ENCODE measurements at regions of chr11 and their contacts with region 1.

Region 1: DNA sequence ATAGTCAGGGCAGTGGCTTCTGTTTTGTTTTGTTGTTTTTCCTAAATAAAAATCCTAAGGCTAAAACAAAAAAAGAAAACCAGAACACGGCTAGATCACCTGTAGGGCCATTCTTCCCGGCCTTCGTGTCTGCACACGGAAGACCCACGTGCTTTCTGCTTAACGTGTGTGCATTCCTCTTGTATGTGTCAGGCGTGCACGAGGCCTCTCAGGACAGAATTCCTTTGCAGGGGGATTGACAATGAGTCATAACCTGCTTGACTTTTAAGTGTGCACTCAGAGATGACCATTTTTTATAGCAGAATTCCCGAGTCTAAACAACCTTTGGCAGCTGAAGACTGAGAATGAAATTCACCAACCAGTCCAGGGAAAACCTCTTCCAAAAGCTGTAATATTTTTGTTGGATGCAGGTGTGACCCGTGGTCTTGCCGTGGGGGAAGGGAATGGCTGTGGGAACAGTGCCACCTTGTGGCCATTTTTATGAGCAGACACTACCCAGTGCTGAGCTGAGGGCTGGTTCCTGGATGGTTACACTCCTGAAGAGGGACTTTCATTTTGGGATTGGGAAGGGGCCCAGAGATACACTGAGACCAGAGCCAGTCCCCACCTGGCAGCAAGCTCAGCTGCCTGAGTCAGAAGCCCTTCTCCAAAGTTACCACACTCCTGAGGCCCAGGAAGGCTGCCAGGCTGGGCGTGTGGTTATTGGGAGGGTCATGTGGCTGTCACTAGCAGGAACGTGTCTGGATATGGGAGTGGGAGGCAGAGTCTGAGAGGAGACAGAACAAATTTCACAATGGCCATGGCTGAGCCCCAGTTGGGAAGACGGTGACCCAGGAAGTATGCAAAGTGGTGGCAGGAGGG is 35.8 kb upstream of the DKK3 start:
- DNase-seq: peak; percentile 73
- H3K4me3 ChIP-seq: no peak overlapping the region
- H3K27ac ChIP-seq: peak overlapping the region; percentile 36 to 66 (median 40)
- H3K4me1 ChIP-seq: peaks cover 0 to 15% (median 9%) of the 10 kb centered on the region in 4 donors
- H3K27me3 ChIP-seq: no peaks in the 10 kb centered on the region
- CTCF ChIP-seq: peak; percentile 87 to 96 (median 88)
- EP300 ChIP-seq: peak; percentile 50
- POLR2A ChIP-seq: no peak

Region 2: DNA sequence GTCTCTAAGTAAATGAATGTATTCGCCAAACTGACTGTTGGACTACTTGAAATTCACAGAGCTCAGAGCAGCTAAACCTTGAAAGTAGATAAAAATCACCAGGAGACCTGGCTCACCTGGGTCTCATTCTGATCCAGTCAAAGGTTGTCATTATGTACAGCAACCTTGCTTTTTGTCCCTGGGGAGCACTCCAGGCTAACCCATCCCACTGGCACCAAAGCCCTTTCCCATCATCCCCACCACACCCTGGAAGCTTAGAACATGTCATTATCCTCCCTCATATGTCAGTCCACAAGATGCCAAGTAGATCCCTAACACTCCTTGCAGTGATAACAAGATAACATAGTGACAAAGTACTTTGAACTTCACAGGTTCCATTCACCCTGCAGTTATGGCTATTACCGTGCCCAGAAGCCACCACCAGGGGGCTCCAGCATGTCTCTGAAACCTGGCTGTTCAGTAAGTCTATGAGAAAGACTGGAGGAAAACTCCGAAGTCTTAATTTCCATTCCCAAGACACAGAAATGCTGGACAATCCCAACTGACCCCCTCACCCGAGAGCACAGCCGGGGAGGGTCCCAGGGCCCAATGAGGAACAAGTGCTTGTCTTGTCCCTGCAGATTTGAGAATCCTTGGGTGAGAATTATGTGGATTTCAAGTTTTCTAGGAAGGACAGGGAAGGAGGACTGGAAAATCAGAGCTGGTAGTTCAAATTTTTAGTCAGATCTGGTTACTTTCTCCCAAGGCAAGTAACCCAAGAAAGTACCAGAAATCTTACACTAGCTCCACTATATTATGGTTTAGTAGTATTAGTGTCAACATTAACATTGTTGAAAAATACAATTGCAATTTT is 245.4 kb before region 1 on chr11:
- in situ Hi-C with region 1: loop called (anchors 5 to 25 kb)
- intact Hi-C with region 1: loop called (anchors 2 kb)
- DNase-seq: peak; percentile 88
- H3K4me3 ChIP-seq: no peak overlapping the region
- H3K27ac ChIP-seq: no peak overlapping the region
- H3K4me1 ChIP-seq: no peaks in the 10 kb centered on the region
- H3K27me3 ChIP-seq: peaks cover 13% of the 10 kb centered on the region
- CTCF ChIP-seq: peak; percentile 65 to 91 (median 88)
- EP300 ChIP-seq: no peak
- POLR2A ChIP-seq: no peak

Region 3: DNA sequence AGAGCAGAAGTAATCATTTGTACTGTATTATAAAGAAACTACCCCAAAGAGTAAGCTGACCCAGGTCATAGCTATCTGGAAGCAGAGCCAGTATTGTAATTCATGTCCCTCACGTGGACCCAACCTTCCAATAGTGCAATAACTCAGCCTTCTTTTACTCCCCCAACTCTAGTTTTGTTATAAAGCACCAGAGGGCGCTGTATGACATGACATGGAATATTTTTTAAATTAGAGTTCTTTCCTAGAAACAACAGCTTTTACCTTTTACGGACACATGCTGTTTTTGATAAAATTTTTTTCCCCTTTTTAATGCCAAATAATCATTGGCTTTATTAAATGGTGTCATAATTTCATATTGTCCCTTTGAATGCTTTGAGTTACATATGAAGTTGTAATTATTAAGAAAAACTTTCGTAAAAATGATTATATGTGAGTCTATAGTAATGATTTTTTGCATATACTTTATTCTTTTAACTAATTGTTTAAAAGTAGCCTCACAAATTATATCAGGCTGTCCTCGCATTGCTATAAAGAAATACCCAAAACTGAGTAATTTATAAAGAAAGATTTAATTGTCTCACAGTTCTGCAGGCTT is 112.6 kb before region 1 on chr11:
- in situ Hi-C with region 1: loop called in 3 of 4 experiments (anchors 10 to 25 kb)
- intact Hi-C with region 1: loop called (anchors 5 kb)
- DNase-seq: no peak
- H3K4me3 ChIP-seq: no peak overlapping the region
- H3K27ac ChIP-seq: no peak overlapping the region
- H3K4me1 ChIP-seq: no peaks in the 10 kb centered on the region
- H3K27me3 ChIP-seq: no peaks in the 10 kb centered on the region
- CTCF ChIP-seq: peak; percentile 50 to 64 (median 56)
- EP300 ChIP-seq: no peak
- POLR2A ChIP-seq: no peak

Region 4: DNA sequence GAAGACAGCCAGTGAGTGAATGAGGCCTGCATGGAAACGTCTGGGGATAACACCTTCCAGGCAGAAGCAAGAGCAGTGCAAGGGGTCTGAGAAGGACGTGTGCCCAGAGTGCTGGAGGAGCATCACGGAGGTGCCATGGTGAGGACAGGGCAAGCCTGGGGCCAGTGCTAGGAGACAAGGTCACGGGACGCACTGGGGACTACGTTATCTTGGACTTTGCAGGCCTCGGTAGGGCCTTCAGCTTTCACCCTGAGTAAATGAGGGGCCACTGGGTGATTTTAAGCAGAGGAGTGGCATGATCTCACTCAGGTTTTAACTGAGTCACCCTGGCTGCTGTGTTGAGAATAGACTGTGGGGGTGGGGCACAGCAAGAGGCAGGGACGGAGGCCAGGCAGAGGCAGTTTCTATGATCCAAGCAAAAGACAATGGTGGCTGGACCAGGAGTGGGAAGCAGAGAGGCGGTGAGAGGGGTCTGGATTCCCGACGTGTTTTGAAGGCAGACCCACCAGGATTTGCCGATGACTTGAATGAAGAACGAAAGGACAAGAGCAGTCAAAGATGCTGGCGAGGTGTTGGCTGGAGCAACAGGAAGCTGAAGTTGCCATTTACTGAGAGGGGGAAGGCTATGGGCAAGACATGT is 230.5 kb after region 1 on chr11:
- in situ Hi-C with region 1: loop called in 1 of 4 experiments (anchors 5 kb)
- intact Hi-C with region 1: no loop called
- DNase-seq: no peak
- H3K4me3 ChIP-seq: no peak overlapping the region
- H3K27ac ChIP-seq: no peak overlapping the region
- H3K4me1 ChIP-seq: peaks cover 0 to 10% (median 5%) of the 10 kb centered on the region in 4 donors
- H3K27me3 ChIP-seq: no peaks in the 10 kb centered on the region
- CTCF ChIP-seq: no peak
- EP300 ChIP-seq: no peak
- POLR2A ChIP-seq: no peak

Region 5: GRCh38 chr11:12288212-12288930 is 244.2 kb after region 1 on chr11:
- in situ Hi-C with region 1: loop called in 2 of 4 experiments (anchors 5 kb)
- intact Hi-C with region 1: no loop called
- DNase-seq: peak; percentile 79
- H3K4me3 ChIP-seq: no peak overlapping the region
- H3K27ac ChIP-seq: peak overlapping the region; percentile 83 to 91 (median 86)
- H3K4me1 ChIP-seq: peaks cover 5 to 37% (median 16%) of the 10 kb centered on the region in 4 donors
- H3K27me3 ChIP-seq: no peaks in the 10 kb centered on the region
- CTCF ChIP-seq: peak; percentile 67 to 85 (median 83)
- EP300 ChIP-seq: no peak
- POLR2A ChIP-seq: no peak

Measured in transverse colon (tissue), 4 donors.